ENCODE measurements at regions of chr16 and their contacts with region 1.

Region 1: GRCh38 chr16:11915644-11916523 is at the start of gene GSPT1:
- DNase-seq: peak; percentile 99
- H3K4me3 Mint-ChIP-seq: peak within 1 kb of the TSS; percentile 95
- H3K27ac Mint-ChIP-seq: peak within 1 kb of the TSS; percentile 94
- H3K4me1 Mint-ChIP-seq: peaks cover 32% of the 10 kb centered on the region
- H3K27me3 Mint-ChIP-seq: peaks cover 9% of the 10 kb centered on the region
- total RNA-seq, gene GSPT1: 216 and 226 TPM in 2 replicates

Region 2: DNA sequence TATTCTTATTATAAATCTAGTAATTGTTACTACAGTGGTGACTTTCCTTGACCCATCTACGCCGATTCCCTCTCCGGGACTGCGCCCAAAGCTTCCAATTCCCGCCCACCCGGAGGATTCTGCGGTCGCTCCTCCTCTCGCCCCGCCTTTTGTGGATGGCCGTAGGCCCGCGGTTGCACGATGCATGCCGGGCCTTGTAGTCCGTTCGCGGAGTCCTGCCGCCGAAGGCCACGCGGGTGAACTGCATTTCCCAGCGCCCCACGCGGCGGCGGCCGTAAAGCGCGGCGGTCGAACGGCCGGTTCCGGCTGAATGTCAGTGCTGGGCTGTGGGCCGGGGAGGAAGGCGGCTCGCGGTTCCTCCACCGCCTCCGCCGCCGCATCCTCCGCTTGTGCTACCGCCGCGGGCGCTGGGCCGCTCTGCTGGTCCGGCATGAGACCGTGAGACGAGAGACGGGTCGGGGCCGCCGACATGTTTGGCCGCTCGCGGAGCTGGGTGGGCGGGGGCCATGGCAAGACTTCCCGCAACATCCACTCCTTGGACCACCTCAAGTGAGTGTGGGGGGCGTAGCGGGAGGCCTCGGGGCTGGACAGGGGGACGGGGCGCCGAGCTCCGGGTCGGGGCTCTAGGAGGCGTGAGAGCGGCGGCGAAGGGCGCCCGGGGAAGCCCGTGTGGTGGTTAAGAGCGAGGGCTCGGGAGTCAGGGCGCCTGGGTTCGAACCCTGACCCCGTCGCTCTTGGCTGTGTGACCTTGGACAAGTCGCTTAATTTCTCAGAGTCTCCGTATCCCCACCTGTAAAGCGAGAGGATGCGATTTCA is 971.4 kb before region 1 on chr16 and contains the start of gene CLEC16A:
- intact Hi-C with region 1: loop called (anchors 5 kb)
- DNase-seq: peak; percentile 95
- H3K4me3 Mint-ChIP-seq: peak within 1 kb of the TSS; percentile 82
- H3K27ac Mint-ChIP-seq: peak within 1 kb of the TSS; percentile 79
- H3K4me1 Mint-ChIP-seq: peaks cover 49% of the 10 kb centered on the region
- H3K27me3 Mint-ChIP-seq: no peaks in the 10 kb centered on the region
- total RNA-seq, gene CLEC16A: 44.8 and 48.7 TPM in 2 replicates

Region 3: GRCh38 chr16:11586856-11587642 is 328.8 kb before region 1 on chr16 and contains the start of gene LITAF:
- intact Hi-C with region 1: no loop called
- DNase-seq: peak; percentile 40
- H3K4me3 Mint-ChIP-seq: peak within 1 kb of the TSS; percentile 90
- H3K27ac Mint-ChIP-seq: peak within 1 kb of the TSS; percentile 92
- H3K4me1 Mint-ChIP-seq: peaks cover 32% of the 10 kb centered on the region
- H3K27me3 Mint-ChIP-seq: peaks cover 4% of the 10 kb centered on the region
- total RNA-seq, gene LITAF: 121 and 135 TPM in 2 replicates

Region 4: DNA sequence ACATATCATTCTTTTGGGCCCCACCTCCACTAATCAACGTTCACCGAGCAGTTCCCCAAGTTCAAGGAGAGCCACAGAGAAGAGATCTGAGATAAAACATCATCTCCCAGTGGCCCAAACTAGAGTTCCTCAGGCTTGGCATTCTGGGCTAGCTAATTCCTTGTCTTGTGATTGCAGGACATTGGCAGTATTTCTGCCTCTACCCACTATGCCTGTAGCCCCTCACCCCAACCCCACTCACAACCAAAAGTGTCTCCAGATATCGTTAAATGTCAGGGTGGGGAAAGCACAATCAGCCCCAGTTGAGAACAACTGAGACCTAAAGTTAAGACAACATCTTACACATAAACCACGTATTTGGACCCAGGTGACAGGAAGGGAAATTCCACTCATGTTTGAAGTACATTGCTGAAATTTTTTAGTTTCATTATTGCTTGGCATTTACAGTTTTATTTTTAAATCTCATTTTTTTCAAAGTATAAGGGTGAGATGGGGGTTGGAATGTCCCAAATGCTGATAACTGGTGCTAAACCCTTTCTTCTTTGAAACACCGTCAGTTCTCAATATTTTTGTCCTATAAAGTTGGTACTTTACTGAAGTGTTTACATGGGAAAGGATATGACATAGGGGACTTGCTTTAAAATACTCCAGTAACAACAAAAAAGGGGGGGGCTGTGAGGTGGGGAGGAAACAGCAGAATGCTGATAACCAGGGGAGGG is 132.4 kb before region 1 on chr16:
- intact Hi-C with region 1: loop called (anchors 5 kb)
- DNase-seq: peak; percentile 53
- H3K4me3 Mint-ChIP-seq: peak overlapping the region; percentile 80
- H3K27ac Mint-ChIP-seq: peak overlapping the region; percentile 99
- H3K4me1 Mint-ChIP-seq: peaks cover 52% of the 10 kb centered on the region
- H3K27me3 Mint-ChIP-seq: no peaks in the 10 kb centered on the region

Region 5: DNA sequence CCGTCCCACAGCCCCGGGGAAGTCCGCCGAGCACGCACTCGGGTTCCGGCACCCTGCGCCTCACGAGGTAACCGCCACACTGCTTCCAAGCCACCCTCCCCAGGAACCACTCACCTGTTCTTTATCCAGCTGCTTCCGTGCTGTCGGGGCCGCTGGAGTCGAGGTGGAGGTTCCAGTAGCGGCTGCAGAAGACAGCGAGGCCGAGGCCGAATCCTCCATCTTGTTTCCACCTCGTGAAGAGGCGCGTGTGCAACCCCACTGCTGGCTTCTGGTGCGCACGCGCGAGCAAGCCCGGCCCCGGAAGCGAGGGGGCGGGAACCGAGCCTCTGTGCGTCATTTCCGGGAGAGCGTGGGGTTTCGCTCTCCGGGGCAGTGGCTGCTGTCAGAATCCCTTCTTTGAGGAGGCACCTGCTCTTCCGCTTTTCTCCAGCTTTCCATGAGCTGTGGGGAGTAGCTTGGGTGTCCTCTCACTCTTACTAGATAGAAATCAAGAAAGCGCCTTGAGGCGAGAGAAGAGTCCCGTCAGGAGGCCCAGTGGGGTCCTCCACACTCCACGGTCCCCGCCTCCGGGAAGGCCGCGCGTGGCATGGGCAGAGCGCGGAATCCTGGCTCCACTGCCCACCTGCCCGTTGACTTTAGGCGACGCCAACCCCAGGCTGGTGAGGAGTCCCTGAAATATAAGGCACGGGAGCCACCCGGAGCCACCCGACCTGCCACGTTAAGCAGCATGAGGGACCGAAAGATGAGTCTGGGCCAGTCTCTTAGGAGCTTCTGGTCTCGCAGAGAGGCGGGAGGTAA is 64.4 kb before region 1 on chr16 and contains the start of gene RSL1D1:
- intact Hi-C with region 1: loop called (anchors 2 kb)
- DNase-seq: peak; percentile 95
- H3K4me3 Mint-ChIP-seq: peak within 1 kb of the TSS; percentile 98
- H3K27ac Mint-ChIP-seq: peak within 1 kb of the TSS; percentile 89
- H3K4me1 Mint-ChIP-seq: peaks cover 30% of the 10 kb centered on the region
- H3K27me3 Mint-ChIP-seq: no peaks in the 10 kb centered on the region
- total RNA-seq, gene RSL1D1: 326 and 348 TPM in 2 replicates

Region 6: DNA sequence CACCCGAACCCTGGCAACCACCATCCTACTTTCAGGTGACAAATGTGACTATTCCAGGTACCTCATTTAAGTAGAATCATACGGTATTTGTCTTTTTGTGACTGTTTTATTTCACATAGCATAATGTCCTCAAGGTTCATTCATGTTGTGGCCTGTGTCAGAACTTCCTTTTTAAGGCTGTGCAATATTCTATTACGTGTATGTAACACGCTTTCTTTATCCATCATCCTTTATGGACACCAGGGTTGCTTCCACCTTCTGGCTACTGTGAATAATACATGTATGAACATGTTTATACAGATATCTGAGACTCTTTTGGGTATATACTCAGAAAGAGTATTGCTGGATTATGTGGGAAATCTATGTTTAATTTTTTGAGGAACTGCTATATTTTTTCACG is 35.9 kb before region 1 on chr16:
- intact Hi-C with region 1: no loop called
- DNase-seq: no peak
- H3K4me3 Mint-ChIP-seq: no peak overlapping the region
- H3K27ac Mint-ChIP-seq: no peak overlapping the region
- H3K4me1 Mint-ChIP-seq: peaks cover 4% of the 10 kb centered on the region
- H3K27me3 Mint-ChIP-seq: no peaks in the 10 kb centered on the region

Region 7: GRCh38 chr16:12067714-12068401 is 152.0 kb after region 1 on chr16:
- intact Hi-C with region 1: loop called (anchors 5 kb)
- DNase-seq: peak; percentile 47
- H3K4me3 Mint-ChIP-seq: no peak overlapping the region
- H3K27ac Mint-ChIP-seq: no peak overlapping the region
- H3K4me1 Mint-ChIP-seq: no peaks in the 10 kb centered on the region
- H3K27me3 Mint-ChIP-seq: no peaks in the 10 kb centered on the region